GM18951 (cell line): ENCODE measurements at regions of chr10 and their contacts with region 1.

Region 1: GRCh38 chr10:21989453-21990154 is 13.9 kb downstream of the DNAJC1 start:
- POLR2A ChIP-seq: no peak

Region 2: DNA sequence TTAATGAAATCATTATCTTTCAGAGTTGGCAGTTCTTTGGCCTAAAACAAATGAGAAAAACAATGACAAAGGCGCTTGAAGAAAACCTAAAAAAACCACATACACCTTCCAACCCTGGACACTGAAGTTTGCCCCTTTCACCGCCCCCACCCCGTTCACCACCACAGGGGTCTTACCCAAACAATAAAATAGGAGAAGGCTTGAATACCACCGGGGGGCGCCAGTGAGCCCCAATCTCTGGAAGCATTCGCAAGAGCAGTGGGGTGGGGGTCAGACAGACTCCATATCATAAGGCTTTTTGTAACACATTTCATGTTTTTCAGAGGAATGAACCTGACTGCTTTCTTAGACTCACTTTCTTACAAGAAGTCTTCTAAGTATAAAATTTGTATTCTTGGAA is 561.1 kb after region 1 on chr10:
- in situ Hi-C with region 1: loop called (anchors 25 kb)
- POLR2A ChIP-seq: no peak